Activated naive CD4-positive, alpha-beta T cell treated with anti-CD3 and anti-CD28 coated beads, Interleukin-2, amount 10 ng/mL, durations not matched to agents 7 days and 5 days (primary cell): ENCODE measurements at regions of chr3 and their contacts with region 1.

Region 1: DNA sequence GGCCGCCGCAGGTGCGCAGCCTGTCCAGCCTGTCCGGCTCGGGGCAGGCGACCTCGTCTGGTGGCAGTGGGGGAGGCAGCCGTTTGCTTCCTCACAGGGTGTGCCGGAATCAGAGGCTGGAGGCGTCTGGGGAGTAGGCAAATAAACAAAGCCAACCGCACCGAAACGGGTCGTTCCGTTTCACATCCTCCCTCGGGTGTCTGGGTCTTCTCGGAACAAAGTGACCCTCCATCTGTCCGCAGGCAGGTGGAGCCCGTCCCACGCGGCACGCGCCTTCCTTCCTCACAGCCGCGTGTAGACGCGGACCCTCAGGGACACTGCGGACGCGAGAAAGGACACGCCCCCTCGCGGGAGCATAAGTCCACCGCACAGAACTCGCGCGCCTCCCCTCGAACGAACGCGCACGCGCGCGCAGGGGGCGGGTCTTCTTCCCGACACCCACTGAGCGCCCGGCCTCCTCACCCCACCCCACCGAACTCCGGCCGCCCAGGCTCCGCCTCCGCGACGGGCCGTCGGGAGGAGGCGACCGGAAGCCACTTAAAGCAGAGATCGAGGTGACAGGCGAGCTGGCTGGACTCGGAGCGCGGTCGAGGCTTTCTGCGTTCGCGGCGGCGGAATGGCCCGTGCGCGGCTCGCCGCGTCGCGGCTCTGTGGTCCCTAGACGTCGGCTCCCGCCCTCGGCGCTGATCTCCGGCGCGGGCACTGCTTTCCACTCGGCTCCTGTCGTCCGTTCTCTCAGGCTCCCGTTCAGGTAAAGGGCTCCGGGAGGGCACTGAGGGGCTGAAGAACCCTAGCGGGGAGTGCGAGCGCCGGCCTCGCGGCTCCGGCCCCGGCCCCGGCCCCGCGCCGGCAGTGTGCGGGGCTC is at the start of gene TIPARP:
- DNase-seq: peak; percentile 99
- H3K4me3 Mint-ChIP-seq: peak within 1 kb of the TSS; percentile 85
- H3K27ac Mint-ChIP-seq: peak within 1 kb of the TSS; percentile 98
- H3K4me1 Mint-ChIP-seq: peaks cover 45% of the 10 kb centered on the region
- H3K27me3 Mint-ChIP-seq: peaks cover 11% of the 10 kb centered on the region

Region 2: DNA sequence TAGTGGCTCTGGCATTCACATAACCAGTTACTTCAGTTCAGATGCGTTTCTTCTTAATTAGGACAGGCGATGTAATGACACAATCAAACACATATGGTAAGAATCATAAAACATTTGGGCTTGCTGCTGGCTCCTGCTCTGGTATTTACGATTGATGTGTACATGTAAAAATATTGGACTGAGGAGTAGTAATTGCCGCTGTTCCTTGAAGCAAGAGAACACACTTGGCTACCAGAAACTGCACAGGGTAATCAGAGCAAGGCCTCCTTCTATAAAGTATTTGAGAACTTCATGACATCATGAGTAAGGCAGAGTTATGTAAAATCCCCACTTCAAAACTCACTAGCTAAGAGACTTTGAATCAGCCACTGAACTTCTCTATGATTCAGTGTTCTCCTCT is 277.4 kb before region 1 on chr3:
- CTCF ChIA-PET with region 1: no interaction called
- DNase-seq: no peak
- H3K4me3 Mint-ChIP-seq: no peak overlapping the region
- H3K27ac Mint-ChIP-seq: no peak overlapping the region
- H3K4me1 Mint-ChIP-seq: no peaks in the 10 kb centered on the region
- H3K27me3 Mint-ChIP-seq: peaks cover 7% of the 10 kb centered on the region

Region 3: DNA sequence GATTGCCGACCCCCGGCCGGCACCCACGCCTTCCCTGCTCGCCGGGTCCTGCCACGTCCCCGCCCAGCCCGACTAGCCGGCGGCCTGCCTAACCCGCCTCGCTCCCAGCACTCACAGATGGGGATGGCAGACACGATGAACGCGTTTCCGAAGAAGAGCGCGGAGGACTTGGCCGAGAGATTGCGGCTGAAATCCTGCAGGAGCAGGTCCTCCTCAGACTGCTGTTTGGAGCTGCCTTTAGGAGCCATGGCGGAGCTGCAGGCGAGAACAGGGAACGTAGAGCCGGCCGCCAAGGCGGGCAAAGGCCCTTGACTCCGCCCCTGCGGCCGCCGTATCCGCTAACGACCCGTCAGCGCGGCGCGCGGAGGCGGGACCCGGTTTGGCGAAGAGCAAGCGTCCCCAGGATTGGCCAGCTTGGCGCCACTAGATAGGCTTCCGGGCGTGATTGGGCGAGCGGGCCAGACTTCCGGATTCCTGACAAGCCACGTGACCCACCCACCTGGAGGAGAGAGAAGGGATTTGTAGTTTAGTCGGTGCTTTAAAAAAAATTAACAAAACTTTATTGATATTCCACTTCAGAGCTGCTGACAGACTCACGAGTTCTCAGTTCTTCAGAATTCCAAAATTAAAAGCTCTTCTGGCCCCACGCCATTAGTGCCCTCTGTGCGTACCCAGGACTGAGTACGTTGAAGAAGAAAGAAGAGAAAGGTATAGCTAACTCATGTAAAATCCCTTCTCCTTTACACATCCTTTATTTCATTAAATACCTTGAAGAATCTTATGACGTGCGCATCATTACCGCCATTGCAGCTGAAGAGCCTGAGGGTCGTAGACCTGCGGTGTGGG is 119.2 kb before region 1 on chr3 and contains the start of gene SSR3:
- CTCF ChIA-PET with region 1: interaction called, 34 read pairs
- DNase-seq: peak; percentile 99
- H3K4me3 Mint-ChIP-seq: peak within 1 kb of the TSS; percentile 93
- H3K27ac Mint-ChIP-seq: peak within 1 kb of the TSS; percentile 84
- H3K4me1 Mint-ChIP-seq: peaks cover 49% of the 10 kb centered on the region
- H3K27me3 Mint-ChIP-seq: peaks cover 6% of the 10 kb centered on the region

Region 4: DNA sequence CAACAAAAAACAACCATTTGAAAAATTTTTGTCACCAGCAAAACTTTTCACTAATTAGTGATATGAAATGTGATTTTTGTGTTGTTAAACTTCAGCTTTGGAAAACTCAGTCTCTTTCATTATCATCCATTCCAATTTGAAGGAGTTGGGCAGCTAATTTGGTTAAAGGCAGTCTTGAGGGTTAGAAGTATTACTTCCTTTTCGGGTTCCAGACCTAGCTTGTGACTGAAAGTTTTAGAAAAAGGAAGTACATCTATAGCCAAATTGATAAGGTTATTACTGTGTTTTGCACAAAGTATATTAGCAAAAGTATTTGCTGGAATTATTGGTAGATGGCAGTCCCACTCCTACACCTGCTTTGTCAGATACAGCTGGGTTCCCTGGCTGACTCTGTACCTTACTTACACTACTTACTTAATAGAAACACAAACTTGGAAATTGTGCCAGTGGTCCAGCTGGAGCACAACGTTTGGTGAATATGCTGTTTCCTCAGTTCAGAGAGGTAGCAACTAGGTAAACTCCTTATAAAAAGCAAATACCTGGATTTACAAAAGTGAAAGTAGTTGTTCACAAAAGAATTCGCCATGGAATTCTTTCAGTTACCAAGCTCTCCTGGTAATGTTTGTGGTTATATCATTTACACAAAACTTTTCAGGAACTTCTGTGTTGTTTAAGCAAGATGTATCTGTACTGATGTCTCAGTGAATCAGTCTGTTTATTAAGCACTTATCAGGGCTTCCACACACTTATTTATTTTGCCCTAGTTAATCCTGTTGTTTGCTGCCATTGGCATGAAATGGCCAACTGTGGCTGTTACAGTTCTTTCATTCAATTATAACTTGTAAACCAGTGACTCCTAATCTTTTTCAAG is 31.7 kb after region 1 on chr3:
- CTCF ChIA-PET with region 1: no interaction called
- DNase-seq: no peak
- H3K4me3 Mint-ChIP-seq: no peak overlapping the region
- H3K27ac Mint-ChIP-seq: peak overlapping the region; percentile 37
- H3K4me1 Mint-ChIP-seq: peaks cover 38% of the 10 kb centered on the region
- H3K27me3 Mint-ChIP-seq: no peaks in the 10 kb centered on the region

Region 5: DNA sequence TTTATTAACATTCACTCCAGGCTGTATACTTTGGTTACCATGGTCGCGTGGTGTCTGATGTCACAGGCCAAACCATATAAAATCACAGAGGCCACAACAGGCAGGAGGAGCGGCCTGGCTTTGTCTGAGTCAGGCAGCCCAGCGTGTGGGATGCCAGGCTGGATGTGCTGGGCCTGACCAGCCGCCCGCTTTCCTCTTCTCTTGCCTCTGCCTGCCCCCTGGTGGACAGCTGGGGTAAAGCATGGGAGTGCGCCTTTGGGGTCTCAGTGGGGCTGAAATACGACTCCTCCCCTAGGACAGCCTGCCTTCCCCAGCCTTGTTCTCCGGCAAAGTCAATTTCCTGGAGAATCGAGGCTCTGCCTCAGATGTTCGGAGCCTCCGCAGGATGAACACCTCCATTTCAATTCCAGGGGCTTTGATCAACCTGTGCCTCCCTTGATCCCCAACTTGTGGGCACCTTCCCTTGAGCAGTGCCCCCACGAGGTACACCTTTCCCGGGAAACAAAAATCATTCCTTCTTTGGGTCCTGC is 407.5 kb after region 1 on chr3:
- CTCF ChIA-PET with region 1: interaction called, 11 read pairs
- DNase-seq: peak; percentile 87
- H3K4me3 Mint-ChIP-seq: no peak overlapping the region
- H3K27ac Mint-ChIP-seq: no peak overlapping the region
- H3K4me1 Mint-ChIP-seq: peaks cover 42% of the 10 kb centered on the region
- H3K27me3 Mint-ChIP-seq: peaks cover 4% of the 10 kb centered on the region

Region 6: DNA sequence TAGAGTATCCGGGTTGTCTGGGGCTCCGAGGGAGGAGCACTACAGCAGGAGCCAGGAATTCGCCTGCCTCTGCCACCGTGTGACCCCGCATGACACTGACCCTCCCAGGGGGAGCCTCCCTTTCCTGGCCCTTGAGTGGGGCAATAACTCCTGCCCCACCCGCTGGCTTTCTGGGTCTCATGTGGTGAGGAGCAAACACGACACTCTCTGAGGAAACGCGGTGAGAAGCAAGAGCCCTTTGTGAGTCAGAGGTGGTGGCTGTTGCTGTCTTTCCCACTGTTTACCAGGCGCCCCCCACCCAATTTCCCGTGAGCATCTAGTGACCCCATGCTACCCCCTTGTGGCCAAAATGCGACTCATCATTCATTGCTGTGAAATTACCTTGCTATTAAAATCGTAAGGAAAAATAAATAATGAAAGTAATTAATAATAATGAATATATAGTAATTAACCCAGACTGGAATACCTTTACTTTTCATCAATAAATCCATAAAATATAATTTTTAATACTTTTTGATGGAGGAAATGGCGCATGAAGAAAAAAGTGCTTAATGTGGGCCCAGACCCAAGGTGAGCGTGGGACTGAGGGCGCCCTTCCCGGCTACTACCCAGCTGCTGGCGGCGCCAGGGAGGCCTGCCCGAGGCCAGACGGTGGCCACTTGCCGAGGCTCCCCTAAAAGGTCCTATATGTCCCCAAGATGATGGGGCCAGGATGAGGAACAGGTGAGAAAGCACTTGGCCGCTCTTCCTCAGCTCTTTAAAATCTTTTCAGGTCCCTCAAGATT is 456.4 kb after region 1 on chr3:
- CTCF ChIA-PET with region 1: interaction called, 20 read pairs
- DNase-seq: peak; percentile 86
- H3K4me3 Mint-ChIP-seq: peak overlapping the region; percentile 29
- H3K27ac Mint-ChIP-seq: peak overlapping the region; percentile 98
- H3K4me1 Mint-ChIP-seq: peaks cover 88% of the 10 kb centered on the region
- H3K27me3 Mint-ChIP-seq: no peaks in the 10 kb centered on the region